Common myeloid progenitor, CD34-positive (primary cell): ENCODE measurements at regions of chr1 and their contacts with region 1.

Region 1: DNA sequence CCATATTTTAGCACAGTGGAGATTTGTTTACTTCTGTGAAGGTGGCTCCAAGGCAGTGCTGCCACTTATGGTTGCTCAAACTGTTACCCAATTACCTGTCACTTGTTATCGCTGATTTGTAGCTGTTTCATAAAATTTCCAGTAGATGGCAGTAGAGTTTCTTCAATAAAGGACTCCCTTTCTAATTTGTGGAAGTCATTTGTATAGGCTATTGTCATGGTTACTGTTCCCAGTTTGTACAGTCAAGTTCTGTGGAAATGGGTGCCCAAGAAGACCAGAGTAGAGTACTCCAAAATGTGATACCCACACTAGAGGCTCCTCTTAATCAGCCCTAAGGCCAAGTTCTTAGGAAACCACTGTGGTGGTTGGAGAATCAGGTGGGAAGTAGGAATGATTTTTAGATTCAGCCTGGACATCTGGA is 186.1 kb downstream of the CLEC20A start:
- DNase-seq: peak; percentile 68 to 82 (median 75)
- H3K4me3 ChIP-seq: no peak overlapping the region
- H3K27ac ChIP-seq: no peak overlapping the region
- H3K4me1 ChIP-seq: peaks cover 0 to 7% (median 0%) of the 10 kb centered on the region in 4 experiments
- H3K27me3 ChIP-seq: no peaks in the 10 kb centered on the region

Region 2: GRCh38 chr1:178143730-178144690 is 166.7 kb before region 1 on chr1:
- CTCF ChIA-PET with region 1: no interaction called
- POLR2A ChIA-PET with region 1: no interaction called
- DNase-seq: peak in 1 of 3 donors; percentile 15
- H3K4me3 ChIP-seq: peak overlapping the region in 1 of 7 experiments; percentile 20
- H3K27ac ChIP-seq: no peak overlapping the region
- H3K4me1 ChIP-seq: peaks cover 0 to 7% (median 3%) of the 10 kb centered on the region in 4 experiments
- H3K27me3 ChIP-seq: no peaks in the 10 kb centered on the region

Region 3: DNA sequence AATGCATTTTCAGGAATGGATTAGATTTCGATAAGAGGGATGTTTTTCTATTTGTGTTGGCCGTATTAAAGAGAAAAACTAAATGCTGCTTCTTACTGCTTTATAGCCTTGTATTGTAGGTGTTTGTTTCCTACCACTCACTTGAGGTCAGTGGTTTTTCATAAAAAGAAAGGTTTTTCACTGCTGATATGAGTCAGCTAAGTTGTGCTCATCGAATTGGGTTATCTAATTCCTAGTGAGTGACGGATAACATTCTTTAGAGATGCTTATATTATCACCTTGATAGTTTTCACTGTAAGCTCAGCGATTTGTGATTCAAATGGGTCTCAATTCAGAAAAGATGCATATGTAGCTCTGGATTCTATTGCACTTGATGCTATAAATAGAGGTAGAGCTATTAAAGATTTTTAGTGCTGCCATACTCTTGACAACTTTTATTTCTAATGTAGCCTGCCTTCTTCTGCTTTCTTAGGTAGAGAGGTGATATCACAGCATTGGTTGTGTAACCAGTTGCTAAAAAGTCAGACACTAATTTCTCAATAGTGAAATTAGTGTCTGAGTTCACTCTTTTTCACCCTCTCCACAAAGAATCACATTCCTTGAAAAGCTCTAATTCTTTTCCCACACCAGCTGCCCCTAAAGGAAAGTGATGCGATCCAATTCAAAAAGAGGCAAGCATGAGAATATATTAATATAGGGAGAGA is 36.8 kb before region 1 on chr1:
- CTCF ChIA-PET with region 1: no interaction called
- POLR2A ChIA-PET with region 1: no interaction called
- DNase-seq: no peak
- H3K4me3 ChIP-seq: no peak overlapping the region
- H3K27ac ChIP-seq: no peak overlapping the region
- H3K4me1 ChIP-seq: peaks cover 0 to 17% (median 5%) of the 10 kb centered on the region in 4 experiments
- H3K27me3 ChIP-seq: no peaks in the 10 kb centered on the region

Region 4: DNA sequence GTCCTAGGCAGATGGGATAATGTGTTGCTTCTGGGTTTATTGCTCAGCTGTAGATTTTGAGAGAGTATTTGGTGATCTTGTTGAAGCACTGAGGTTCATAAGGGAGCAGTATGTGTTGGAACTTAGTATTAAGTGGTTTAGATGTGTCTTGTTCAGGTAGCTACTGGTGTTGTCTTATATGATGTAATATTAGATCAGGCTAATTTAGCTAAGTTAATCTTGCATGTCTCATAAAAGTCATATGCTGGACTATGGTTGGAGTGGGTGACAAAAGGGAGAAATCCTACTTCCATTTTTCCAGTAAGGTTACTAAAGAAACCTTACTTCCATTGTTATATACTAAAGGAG is 10.4 kb before region 1 on chr1:
- CTCF ChIA-PET with region 1: interaction called, 13 read pairs
- POLR2A ChIA-PET with region 1: no interaction called
- DNase-seq: no peak
- H3K4me3 ChIP-seq: no peak overlapping the region
- H3K27ac ChIP-seq: no peak overlapping the region
- H3K4me1 ChIP-seq: no peaks in the 10 kb centered on the region
- H3K27me3 ChIP-seq: no peaks in the 10 kb centered on the region